Activated B cell treated with CpG ODN at 0.5 μM for 24 hours (primary cell): ENCODE measurements at regions of chr5 and their contacts with region 1.

Region 1: DNA sequence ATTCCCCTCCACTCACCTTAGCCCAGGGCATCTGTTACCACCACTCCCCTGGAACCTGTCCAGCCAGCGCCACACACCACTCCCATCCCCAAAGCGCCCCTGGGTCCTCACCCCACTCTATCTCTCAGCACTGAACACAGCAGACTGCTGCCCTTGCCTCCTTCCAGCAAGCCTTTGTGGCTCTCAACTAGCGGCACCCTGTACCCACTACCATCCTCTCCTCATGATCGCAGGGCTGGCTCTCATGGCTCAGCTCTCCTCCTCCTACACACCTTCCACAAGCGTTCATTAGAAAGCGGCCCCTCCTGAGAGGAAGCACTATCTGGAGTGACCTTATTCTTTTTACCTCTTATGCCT is 13.3 kb upstream of the BASP1 start:
- DNase-seq: no peak
- ATAC-seq: no peak
- H3K4me3 Mint-ChIP-seq: no peak overlapping the region
- H3K27ac Mint-ChIP-seq: no peak overlapping the region
- H3K4me1 Mint-ChIP-seq: no peaks in the 10 kb centered on the region
- H3K27me3 Mint-ChIP-seq: no peaks in the 10 kb centered on the region
- CTCF ChIP-seq: no peak

Region 2: GRCh38 chr5:17189381-17190036 is 14.6 kb before region 1 on chr5:
- CTCF ChIA-PET with region 1: interaction called, 20 read pairs
- POLR2A ChIA-PET with region 1: no interaction called
- intact Hi-C with region 1: no loop called
- DNase-seq: peak; percentile 44
- ATAC-seq: peak; percentile 37
- H3K4me3 Mint-ChIP-seq: no peak overlapping the region
- H3K27ac Mint-ChIP-seq: no peak overlapping the region
- H3K4me1 Mint-ChIP-seq: peaks cover 7% of the 10 kb centered on the region
- H3K27me3 Mint-ChIP-seq: peaks cover 3% of the 10 kb centered on the region
- CTCF ChIP-seq: no peak

Region 3: GRCh38 chr5:17223367-17224185 is 19.5 kb after region 1 on chr5:
- CTCF ChIA-PET with region 1: no interaction called
- POLR2A ChIA-PET with region 1: no interaction called
- intact Hi-C with region 1: no loop called
- DNase-seq: no peak
- ATAC-seq: no peak
- H3K4me3 Mint-ChIP-seq: peak overlapping the region; percentile 73
- H3K27ac Mint-ChIP-seq: peak overlapping the region; percentile 90
- H3K4me1 Mint-ChIP-seq: peaks cover 94% of the 10 kb centered on the region
- H3K27me3 Mint-ChIP-seq: no peaks in the 10 kb centered on the region
- CTCF ChIP-seq: no peak

Region 4: GRCh38 chr5:17248999-17249634 is 45.0 kb after region 1 on chr5:
- CTCF ChIA-PET with region 1: no interaction called
- POLR2A ChIA-PET with region 1: no interaction called
- intact Hi-C with region 1: no loop called
- DNase-seq: no peak
- ATAC-seq: no peak
- H3K4me3 Mint-ChIP-seq: no peak overlapping the region
- H3K27ac Mint-ChIP-seq: peak overlapping the region; percentile 65
- H3K4me1 Mint-ChIP-seq: peaks cover 70% of the 10 kb centered on the region
- H3K27me3 Mint-ChIP-seq: no peaks in the 10 kb centered on the region
- CTCF ChIP-seq: no peak